ENCODE measurements at regions of chr1 and their contacts with region 1.

Region 1: DNA sequence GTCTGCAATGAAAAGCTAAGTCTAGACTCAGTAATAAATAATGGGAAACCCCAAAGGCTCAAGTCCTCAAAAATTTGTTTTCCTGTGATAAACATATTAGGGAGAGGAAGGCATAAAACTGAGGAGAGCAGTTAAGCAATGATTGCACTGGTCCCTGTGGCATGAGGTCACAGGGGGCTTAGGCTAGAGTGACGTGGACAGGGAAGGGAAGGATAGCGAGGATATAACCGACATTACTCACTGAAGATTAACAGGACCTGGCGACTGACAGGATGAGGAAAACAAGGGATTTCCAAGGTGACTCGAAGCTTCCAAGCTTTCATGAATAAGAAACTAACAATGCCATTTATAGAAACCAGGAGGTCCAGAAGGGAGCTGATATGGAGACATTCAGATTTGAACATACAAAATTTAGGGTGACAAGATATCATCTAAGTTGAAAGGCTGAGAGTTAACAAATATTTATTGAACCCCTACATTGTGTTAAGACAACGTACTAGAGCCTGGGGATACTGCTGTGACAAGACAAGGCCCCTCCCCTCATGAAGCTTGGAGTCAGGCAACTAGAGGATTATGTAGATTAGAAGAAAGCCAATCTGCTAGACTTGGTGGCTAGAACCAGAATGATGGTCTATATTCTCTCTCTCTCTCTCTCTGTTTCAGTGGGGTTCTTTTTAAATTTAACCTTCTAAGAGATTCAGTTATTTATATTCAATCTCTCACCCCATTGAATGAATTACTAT is 33.2 kb upstream of the PKN2 start:
- DNase-seq: no peak
- H3K4me3 ChIP-seq: no peak overlapping the region
- H3K27ac ChIP-seq: no peak overlapping the region
- H3K4me1 ChIP-seq: no peaks in the 10 kb centered on the region
- H3K27me3 ChIP-seq: no peaks in the 10 kb centered on the region
- CTCF ChIP-seq: no peak
- POLR2A ChIP-seq: no peak

Region 2: DNA sequence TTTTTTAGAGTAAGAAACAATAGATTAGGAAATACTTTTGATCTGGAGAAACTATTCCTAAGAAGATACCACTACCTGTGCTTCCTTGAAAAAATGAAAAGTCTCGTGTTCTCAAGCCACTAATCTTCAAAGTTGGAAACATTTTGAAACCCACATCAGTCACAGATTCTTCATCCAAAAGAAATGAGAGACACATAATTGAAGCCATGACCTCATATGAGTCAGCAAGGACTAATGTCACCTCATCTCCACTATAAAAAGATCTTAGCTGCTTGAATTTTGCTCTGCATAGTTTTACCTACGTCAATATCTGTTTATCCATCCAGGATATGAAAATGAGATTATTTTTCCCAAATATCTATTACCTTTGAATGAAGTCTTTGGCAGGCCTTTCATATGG is 279.5 kb before region 1 on chr1:
- intact Hi-C with region 1: no loop called
- DNase-seq: no peak
- H3K4me3 ChIP-seq: no peak overlapping the region
- H3K27ac ChIP-seq: no peak overlapping the region
- H3K4me1 ChIP-seq: no peaks in the 10 kb centered on the region
- H3K27me3 ChIP-seq: no peaks in the 10 kb centered on the region
- CTCF ChIP-seq: no peak
- POLR2A ChIP-seq: no peak

Region 3: GRCh38 chr1:88581703-88582102 is 69.1 kb before region 1 on chr1:
- intact Hi-C with region 1: no loop called
- DNase-seq: no peak
- H3K4me3 ChIP-seq: no peak overlapping the region
- H3K27ac ChIP-seq: no peak overlapping the region
- H3K4me1 ChIP-seq: no peaks in the 10 kb centered on the region
- H3K27me3 ChIP-seq: no peaks in the 10 kb centered on the region
- CTCF ChIP-seq: no peak
- POLR2A ChIP-seq: no peak

Region 4: GRCh38 chr1:88877382-88877825 is 226.6 kb after region 1 on chr1:
- intact Hi-C with region 1: loop called (anchors 5 kb)
- DNase-seq: no peak
- H3K4me3 ChIP-seq: no peak overlapping the region
- H3K27ac ChIP-seq: no peak overlapping the region
- H3K4me1 ChIP-seq: peaks cover 0 to 49% (median 9%) of the 10 kb centered on the region in 3 donors
- H3K27me3 ChIP-seq: no peaks in the 10 kb centered on the region
- CTCF ChIP-seq: peak in 4 of 6 experiments; percentile 33 to 57 (median 50)
- POLR2A ChIP-seq: no peak

Measured in esophagus squamous epithelium (tissue), 5 donors.